ENCODE measurements at regions of chr5 and their contacts with region 1.

Region 1: GRCh38 chr5:83927140-83927733 is 206.6 kb upstream of the HAPLN1 start:
- DNase-seq: peak; percentile 69
- H3K4me3 ChIP-seq: no peak overlapping the region
- H3K27ac ChIP-seq: no peak overlapping the region
- H3K4me1 ChIP-seq: peaks cover 39% of the 10 kb centered on the region
- H3K27me3 ChIP-seq: no peaks in the 10 kb centered on the region

Region 2: GRCh38 chr5:84255315-84255714 is 328.1 kb after region 1 on chr5:
- in situ Hi-C with region 1: loop called (anchors 10 kb)
- DNase-seq: peak; percentile 74
- H3K4me3 ChIP-seq: no peak overlapping the region
- H3K27ac ChIP-seq: no peak overlapping the region
- H3K4me1 ChIP-seq: peaks cover 5% of the 10 kb centered on the region
- H3K27me3 ChIP-seq: no peaks in the 10 kb centered on the region